ENCODE measurements at regions of chr9 and their contacts with region 1.

Region 1: DNA sequence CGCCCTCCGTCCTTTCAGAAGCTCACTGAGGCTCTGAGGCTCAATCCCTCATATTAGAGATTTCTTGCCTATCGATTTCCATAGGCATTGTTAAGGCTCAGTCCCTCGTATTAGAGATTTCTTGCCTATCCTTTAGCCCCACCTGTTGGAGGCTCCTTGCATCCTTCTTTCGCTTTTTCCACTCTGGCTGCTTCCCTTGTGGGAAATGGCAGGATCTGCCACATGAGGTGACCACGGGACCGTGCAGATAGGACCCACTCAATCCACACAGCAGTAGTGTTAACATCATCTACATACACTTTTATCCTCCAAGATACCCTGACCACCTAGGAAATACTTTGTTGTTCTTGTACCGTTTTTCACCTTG is 19.5 kb downstream of the IFT74 start:
- DNase-seq: peak in 1 of 3 donors; percentile 14
- ATAC-seq: peak; percentile 73 to 78
- H3K4me3 ChIP-seq: no peak overlapping the region
- H3K27ac ChIP-seq: no peak overlapping the region
- H3K4me1 ChIP-seq: no peaks in the 10 kb centered on the region
- H3K27me3 ChIP-seq: no peaks in the 10 kb centered on the region

Region 2: GRCh38 chr9:26744191-26744965 is 231.3 kb before region 1 on chr9:
- intact Hi-C with region 1: loop called (anchors 5 kb)
- DNase-seq: no peak
- ATAC-seq: no peak
- H3K4me3 ChIP-seq: no peak overlapping the region
- H3K27ac ChIP-seq: no peak overlapping the region
- H3K4me1 ChIP-seq: no peaks in the 10 kb centered on the region
- H3K27me3 ChIP-seq: no peaks in the 10 kb centered on the region

Region 3: GRCh38 chr9:26936300-26936948 is 39.3 kb before region 1 on chr9:
- intact Hi-C with region 1: no loop called
- DNase-seq: no peak
- ATAC-seq: no peak
- H3K4me3 ChIP-seq: no peak overlapping the region
- H3K27ac ChIP-seq: no peak overlapping the region
- H3K4me1 ChIP-seq: peaks cover 3% of the 10 kb centered on the region
- H3K27me3 ChIP-seq: no peaks in the 10 kb centered on the region

Measured in right cardiac atrium (tissue), 5 donors.